ENCODE measurements at regions of chr4 and their contacts with region 1.

Region 1: DNA sequence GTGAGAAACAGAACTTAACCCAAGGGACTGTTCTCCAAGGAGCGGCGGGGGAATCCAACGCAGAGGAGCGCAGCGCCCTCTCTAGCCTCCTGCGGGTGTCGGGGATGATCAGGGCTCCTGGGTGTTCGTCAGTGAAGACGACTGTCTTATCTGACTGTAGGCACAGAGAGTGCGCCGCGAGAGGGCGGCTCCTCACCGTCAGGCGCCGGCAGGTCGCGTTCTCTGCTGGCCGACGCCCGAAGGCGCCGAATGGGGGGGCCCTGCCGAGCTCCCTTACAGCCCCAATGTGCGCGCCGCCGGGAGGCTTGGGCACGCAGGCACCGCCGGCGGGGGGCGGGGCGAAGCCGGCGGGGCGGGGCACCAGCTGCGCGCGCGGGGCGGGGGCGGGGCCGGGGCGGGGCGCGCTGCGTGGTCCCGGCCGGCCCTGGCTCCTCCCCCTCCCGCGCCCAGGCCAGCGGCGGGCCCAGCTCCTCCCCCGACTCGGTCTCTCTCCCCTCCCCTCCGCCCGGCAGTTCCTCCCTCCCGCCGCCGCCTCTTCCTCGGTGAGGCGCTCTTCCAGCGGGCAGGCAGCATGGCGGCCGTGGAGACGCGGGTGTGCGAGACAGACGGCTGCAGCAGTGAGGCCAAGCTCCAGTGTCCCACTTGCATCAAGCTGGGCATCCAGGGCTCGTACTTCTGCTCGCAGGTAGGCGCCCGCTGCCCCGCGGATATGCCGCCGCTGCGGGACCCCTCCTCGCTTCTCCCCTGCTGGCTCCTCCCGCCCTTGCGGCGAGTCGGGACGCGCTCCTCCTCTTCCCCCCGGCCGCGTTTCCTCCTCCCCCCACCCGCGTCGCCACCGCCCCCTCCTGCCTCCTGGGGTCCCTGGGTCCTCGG is at the start of gene METAP1:
- DNase-seq: peak; percentile 97
- H3K4me3 Mint-ChIP-seq: peak within 1 kb of the TSS; percentile 79
- H3K27ac Mint-ChIP-seq: peak within 1 kb of the TSS; percentile 98
- H3K4me1 Mint-ChIP-seq: peaks cover 29% of the 10 kb centered on the region
- H3K27me3 Mint-ChIP-seq: no peaks in the 10 kb centered on the region
- total RNA-seq, gene METAP1: 41.5 to 44.9 TPM

Region 2: DNA sequence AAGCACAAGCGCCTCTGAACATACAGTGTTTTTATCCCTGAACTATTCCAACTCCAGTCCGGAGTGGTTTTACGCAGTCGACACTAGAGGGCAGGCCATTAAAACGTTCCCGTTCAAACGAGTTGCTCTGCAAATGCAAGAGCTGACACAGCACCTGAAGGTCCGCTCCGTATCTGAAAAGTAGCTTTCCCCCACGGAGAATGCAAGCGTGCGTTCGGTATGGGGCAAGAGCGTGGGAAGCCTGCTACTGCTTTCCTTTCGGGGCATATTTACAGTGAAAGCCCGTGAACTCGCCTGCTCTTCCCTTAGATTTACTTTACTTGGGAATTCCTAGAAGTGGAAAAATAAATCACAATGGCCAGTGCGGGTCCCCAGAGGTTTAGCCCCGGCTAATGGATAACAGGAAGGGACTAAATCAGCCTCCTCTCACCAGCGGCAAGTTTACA is 527.8 kb before region 1 on chr4:
- CTCF ChIA-PET with region 1: interaction called, 17 read pairs
- POLR2A ChIA-PET with region 1: interaction called, 3 read pairs
- DNase-seq: peak; percentile 74
- H3K4me3 Mint-ChIP-seq: peak overlapping the region; percentile 49
- H3K27ac Mint-ChIP-seq: no peak overlapping the region
- H3K4me1 Mint-ChIP-seq: peaks cover 28% of the 10 kb centered on the region
- H3K27me3 Mint-ChIP-seq: no peaks in the 10 kb centered on the region

Region 3: DNA sequence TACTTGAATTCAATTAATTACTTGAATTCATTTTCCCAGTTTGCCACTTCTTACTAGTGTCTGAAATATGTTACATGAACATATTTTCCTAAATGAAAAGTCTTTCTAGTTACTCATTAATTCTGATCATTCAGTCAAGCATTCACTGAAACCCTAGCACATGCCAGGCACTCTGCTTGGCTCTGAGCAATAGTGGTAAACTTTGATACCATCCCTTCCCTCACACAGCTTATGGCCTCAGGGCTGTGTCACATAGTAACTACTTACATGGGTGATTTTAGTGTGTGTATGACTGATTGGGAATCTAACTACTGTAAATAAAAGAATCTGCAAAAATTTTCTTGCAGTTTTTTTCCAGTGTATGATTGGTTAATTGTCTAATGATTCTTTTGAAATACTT is 32.8 kb after region 1 on chr4:
- CTCF ChIA-PET with region 1: interaction called, 14 read pairs
- POLR2A ChIA-PET with region 1: no interaction called
- DNase-seq: no peak
- H3K4me3 Mint-ChIP-seq: no peak overlapping the region
- H3K27ac Mint-ChIP-seq: no peak overlapping the region
- H3K4me1 Mint-ChIP-seq: peaks cover 23% of the 10 kb centered on the region
- H3K27me3 Mint-ChIP-seq: no peaks in the 10 kb centered on the region

Region 4: DNA sequence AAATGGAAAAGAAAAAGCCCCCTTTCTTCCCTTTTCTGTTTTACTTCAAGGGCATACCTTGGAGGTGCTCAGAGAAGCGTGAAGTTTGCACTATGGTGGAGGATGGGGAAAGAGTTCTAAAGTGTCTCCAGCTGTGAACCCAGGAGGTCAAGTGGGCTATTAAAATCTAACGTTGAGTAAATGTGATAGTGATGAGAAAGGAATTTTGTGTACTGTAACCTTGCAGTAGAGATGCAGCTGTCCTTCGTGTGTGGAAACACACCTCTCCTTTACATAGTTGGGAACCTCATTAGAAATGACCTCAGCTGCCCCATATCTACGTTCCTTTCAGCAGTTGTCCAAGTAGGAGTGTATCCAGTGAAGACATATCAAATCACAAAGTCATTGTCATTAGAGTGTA is 66.7 kb after region 1 on chr4:
- CTCF ChIA-PET with region 1: interaction called, 181 read pairs
- POLR2A ChIA-PET with region 1: interaction called, 3 read pairs
- DNase-seq: no peak
- H3K4me3 Mint-ChIP-seq: no peak overlapping the region
- H3K27ac Mint-ChIP-seq: no peak overlapping the region
- H3K4me1 Mint-ChIP-seq: peaks cover 3% of the 10 kb centered on the region
- H3K27me3 Mint-ChIP-seq: no peaks in the 10 kb centered on the region

Region 5: DNA sequence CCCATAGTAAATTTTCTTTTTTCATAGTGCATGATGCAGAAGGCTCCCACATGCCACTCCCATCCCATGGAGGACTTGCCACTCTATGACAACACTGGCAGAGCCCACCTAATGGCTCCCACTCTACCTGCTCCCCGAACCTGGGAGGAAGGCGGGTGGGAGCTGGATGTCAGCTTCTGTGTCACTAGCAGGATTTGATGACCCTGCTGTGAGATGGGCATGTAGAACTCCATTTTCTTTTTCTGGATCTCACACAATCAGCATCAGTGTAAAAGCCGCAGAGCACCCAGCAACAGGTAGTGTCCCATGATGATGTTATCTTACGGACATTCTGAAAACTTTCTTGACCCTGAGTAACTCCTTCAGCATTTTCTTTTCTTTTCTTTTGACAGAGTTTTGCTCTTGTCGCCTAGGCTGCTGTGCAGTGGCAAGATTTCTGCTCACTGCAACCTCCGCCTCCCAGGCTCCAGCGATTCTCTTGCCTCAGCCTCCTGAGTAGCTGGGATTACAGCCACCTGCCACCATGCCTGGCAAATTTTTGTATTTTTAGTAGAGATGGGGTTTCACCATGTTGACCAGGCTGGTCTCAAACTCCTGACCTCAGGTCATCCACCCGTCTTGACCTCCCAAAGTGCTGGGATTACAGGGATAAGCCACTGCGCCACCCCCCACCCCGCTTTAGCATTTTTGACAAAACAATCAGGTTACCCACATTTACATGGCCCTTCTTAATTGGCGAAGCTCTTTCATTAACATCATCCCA is 310.4 kb after region 1 on chr4:
- CTCF ChIA-PET with region 1: no interaction called
- POLR2A ChIA-PET with region 1: no interaction called
- DNase-seq: no peak
- H3K4me3 Mint-ChIP-seq: no peak overlapping the region
- H3K27ac Mint-ChIP-seq: no peak overlapping the region
- H3K4me1 Mint-ChIP-seq: no peaks in the 10 kb centered on the region
- H3K27me3 Mint-ChIP-seq: peaks cover 5% of the 10 kb centered on the region

Region 6: GRCh38 chr4:99405433-99406115 is 410.2 kb after region 1 on chr4:
- CTCF ChIA-PET with region 1: interaction called, 38 read pairs
- POLR2A ChIA-PET with region 1: interaction called, 10 read pairs
- DNase-seq: peak; percentile 57
- H3K4me3 Mint-ChIP-seq: no peak overlapping the region
- H3K27ac Mint-ChIP-seq: no peak overlapping the region
- H3K4me1 Mint-ChIP-seq: peaks cover 26% of the 10 kb centered on the region
- H3K27me3 Mint-ChIP-seq: peaks cover 14% of the 10 kb centered on the region

Measured in activated CD4-positive, alpha-beta memory T cell treated with anti-CD3 and anti-CD28 coated beads, Interleukin-2, amount 10 ng/mL, durations not matched to agents 7 days and 5 days (primary cell).